Ovary (tissue), 10 donors: ENCODE measurements at regions of chr3 and their contacts with region 1.

Region 1: DNA sequence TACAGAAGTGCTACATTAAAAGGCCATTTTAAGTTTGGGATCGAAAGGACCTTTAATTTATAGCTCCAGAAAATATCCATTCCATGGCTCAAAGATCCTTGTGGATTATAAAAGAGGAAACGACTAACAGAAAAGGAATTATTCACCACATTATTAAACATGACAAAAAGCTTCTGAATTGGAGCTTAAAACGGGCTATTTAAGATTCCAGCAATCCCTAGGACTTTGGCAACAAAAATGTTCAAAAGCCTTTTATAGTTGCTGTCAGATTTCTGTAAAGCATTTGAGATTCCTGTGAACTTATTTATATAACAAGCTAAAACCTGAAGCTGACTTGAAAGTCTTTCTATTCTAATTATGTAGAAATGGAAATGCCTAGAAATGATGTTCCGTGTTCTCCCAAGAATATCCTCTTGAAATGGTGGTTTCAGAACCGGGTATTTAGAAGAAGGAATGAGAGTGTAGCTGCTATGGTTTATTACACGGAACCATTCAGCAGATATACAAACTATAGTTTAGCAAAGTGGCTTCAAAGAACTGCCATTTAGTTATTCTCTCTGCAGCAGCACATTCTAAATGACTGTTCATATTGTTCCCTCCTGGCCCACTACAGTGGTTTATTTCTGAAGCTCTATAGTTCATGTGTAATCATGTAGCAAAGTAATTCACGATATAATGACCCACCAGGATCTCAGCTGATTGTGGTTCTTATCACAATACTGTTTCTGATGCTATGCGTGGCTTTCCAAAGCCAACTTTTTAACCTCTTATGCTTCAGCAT is 961.7 kb downstream of the FHIT start:
- DNase-seq: no peak
- H3K4me3 ChIP-seq: no peak overlapping the region
- H3K27ac ChIP-seq: no peak overlapping the region
- H3K4me1 ChIP-seq: no peaks in the 10 kb centered on the region
- H3K27me3 ChIP-seq: no peaks in the 10 kb centered on the region
- CTCF ChIP-seq: no peak
- EP300 ChIP-seq: no peak
- POLR2A ChIP-seq: no peak

Region 2: DNA sequence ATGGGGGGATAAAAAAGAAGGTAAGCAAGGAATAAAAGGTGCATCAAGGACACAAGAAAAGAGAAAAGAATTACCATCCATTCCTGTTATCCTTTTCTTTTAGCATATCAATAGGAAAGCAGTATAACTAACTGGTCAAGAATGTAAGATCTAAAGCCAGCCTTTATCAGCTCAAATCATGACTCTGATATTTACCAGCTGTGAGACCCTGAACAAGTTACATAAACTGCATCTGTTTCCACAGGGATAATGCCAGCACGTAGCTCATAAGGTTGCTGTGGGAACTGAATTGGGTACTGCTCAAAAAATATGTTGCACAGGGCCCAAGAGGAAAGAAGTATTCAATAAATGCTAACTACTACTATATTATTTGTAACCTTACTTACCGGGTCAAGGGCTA is 147.5 kb before region 1 on chr3:
- intact Hi-C with region 1: no loop called
- DNase-seq: no peak
- H3K4me3 ChIP-seq: no peak overlapping the region
- H3K27ac ChIP-seq: no peak overlapping the region
- H3K4me1 ChIP-seq: no peaks in the 10 kb centered on the region
- H3K27me3 ChIP-seq: no peaks in the 10 kb centered on the region
- CTCF ChIP-seq: no peak
- EP300 ChIP-seq: no peak
- POLR2A ChIP-seq: no peak

Region 3: GRCh38 chr3:60250206-60250605 is 39.3 kb before region 1 on chr3:
- intact Hi-C with region 1: no loop called
- DNase-seq: no peak
- H3K4me3 ChIP-seq: no peak overlapping the region
- H3K27ac ChIP-seq: no peak overlapping the region
- H3K4me1 ChIP-seq: no peaks in the 10 kb centered on the region
- H3K27me3 ChIP-seq: no peaks in the 10 kb centered on the region
- CTCF ChIP-seq: no peak
- EP300 ChIP-seq: no peak
- POLR2A ChIP-seq: no peak

Region 4: DNA sequence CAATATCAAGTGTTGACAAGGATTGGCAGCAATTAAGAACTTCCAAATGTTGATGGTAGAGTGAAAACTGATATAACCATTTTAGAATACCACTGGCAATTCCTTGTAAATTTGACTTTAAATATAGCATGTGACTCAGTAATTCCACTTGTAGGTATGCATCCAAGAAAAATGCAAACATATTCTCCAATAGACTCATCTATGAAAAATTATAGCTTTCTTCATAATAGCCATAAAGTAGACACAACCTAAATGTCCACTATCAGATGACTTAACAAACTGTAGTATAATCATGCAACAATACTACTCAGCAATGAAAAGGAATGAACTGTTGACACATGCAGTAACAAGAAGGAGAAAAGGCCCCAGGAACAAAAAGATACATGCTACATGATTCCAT is 26.3 kb before region 1 on chr3:
- intact Hi-C with region 1: loop called in 1 of 4 experiments (anchors 1 kb)
- DNase-seq: no peak
- H3K4me3 ChIP-seq: no peak overlapping the region
- H3K27ac ChIP-seq: no peak overlapping the region
- H3K4me1 ChIP-seq: no peaks in the 10 kb centered on the region
- H3K27me3 ChIP-seq: no peaks in the 10 kb centered on the region
- CTCF ChIP-seq: no peak
- EP300 ChIP-seq: no peak
- POLR2A ChIP-seq: no peak